AG04449 (cell line): ENCODE measurements at regions of chr4 and their contacts with region 1.

Region 1: DNA sequence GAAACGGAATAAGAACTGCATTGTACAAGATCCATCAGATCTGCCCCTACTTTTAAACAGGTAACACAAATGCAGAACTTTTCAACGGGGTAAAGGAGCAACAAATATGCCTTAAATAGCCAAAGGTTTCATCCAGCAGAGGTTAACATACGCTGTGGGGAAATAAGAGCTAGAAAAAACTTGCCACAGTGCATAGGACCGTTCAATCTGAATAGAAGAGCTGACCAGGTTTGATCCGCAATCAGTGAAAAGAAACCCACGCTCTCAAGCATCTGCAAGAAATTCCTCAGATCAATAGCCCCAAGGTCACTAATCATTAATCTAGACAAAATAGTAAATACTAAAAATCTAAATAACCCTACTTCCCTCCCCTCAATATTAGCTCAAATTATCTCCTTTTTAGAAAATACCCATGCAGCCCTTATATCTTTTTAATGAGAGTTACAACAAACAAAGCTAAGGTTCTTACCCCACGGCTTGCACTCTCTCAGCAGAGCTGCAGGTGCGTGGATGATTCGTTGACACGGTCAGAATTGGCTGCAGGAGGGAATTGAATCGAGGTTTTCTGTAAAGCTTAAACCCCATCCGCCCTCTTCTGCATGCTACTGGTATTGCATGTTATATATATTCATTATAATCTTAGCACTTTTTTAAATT is at the start of gene TLR10:
- DNase-seq: no peak
- H3K4me3 ChIP-seq: no peak within 1 kb of the TSS
- CTCF ChIP-seq: peak; percentile 47

Region 2: GRCh38 chr4:38062088-38062893 is 720.3 kb before region 1 on chr4:
- CTCF ChIA-PET with region 1: interaction called, 16 read pairs
- POLR2A ChIA-PET with region 1: no interaction called
- DNase-seq: no peak
- H3K4me3 ChIP-seq: no peak overlapping the region
- CTCF ChIP-seq: peak; percentile 62

Region 3: GRCh38 chr4:38466401-38466800 is 316.2 kb before region 1 on chr4:
- CTCF ChIA-PET with region 1: no interaction called
- POLR2A ChIA-PET with region 1: no interaction called
- DNase-seq: no peak
- H3K4me3 ChIP-seq: no peak overlapping the region
- CTCF ChIP-seq: no peak

Region 4: DNA sequence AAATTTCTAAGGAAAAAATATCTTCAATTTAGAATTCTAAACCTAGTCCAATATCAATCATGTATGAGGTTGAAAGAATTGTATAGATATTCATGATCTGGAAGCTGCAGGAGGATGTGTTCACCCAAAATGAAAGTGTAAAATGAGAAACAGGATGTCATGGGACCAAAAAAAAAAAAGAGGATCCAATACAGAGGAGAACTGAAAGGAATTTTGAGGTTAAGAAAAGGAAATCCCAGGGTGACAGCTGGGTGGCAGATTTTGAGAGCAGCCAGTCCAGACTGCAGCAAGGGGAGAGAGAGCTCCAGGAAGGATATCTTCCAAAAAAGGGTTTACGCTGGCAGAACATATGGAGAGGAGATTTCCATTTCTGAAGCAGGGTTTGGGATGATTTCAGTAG is 38.7 kb before region 1 on chr4:
- CTCF ChIA-PET with region 1: interaction called, 15 read pairs
- POLR2A ChIA-PET with region 1: no interaction called
- DNase-seq: no peak
- H3K4me3 ChIP-seq: no peak overlapping the region
- CTCF ChIP-seq: no peak

Region 5: GRCh38 chr4:38768968-38769394 is 13.6 kb before region 1 on chr4:
- CTCF ChIA-PET with region 1: interaction called, 125 read pairs
- POLR2A ChIA-PET with region 1: no interaction called
- DNase-seq: no peak
- H3K4me3 ChIP-seq: no peak overlapping the region
- CTCF ChIP-seq: no peak

Region 6: DNA sequence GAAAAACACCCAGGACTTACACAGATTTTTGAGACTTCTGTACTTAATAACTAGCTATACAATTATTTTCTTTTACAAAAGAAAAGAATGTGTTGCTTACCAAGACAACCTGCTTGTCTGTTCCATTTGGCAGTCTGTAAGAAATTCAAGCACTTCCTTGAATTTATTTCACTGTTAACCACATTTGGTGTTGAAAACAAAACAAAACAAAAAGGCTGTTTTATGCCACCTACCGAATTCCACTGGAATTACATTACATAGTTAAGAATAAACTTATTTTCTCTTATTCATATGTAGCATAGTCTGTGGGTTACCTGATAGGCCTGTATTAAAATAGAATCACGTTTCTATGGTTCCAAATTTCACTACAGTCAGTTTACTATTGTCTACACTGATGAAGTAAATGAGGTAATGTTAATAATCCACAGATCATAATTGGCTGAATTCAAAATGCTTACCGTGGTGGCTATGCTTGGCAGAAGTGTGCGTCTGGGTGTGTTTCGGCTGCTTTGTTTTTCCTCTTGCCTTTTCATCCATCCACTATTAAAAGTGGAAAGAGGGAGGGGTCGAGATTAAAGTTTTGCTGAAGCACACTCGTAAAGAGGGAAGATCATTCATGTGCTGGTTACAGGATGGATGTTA is 22.2 kb after region 1 on chr4 and contains the start of gene TLR1:
- CTCF ChIA-PET with region 1: interaction called, 191 read pairs
- POLR2A ChIA-PET with region 1: no interaction called
- DNase-seq: peak; percentile 40
- H3K4me3 ChIP-seq: no peak within 1 kb of the TSS
- CTCF ChIP-seq: no peak

Region 7: GRCh38 chr4:38815885-38816782 is 33.6 kb after region 1 on chr4:
- CTCF ChIA-PET with region 1: interaction called, 12 read pairs
- POLR2A ChIA-PET with region 1: no interaction called
- DNase-seq: no peak
- H3K4me3 ChIP-seq: no peak overlapping the region
- CTCF ChIP-seq: no peak

Region 8: DNA sequence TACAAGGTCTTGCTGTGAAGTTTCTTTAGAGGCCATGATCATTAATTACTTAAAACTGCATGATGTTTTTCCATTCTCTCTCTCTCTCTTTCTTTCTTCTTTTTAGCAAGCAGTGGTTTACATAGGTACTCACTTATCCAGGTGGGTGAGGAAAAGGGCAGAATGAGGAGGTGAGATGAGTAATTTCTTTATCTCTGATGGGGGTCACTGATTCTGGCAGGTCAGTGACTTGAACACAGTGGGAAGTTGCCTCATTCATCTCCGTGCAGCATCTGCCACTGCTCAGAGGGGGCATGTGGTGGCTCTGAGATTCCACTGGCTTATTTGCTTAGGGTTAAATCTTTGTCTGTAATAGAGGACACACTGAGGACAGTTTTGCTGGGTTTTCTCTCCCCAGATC is 147.6 kb after region 1 on chr4:
- CTCF ChIA-PET with region 1: no interaction called
- POLR2A ChIA-PET with region 1: no interaction called
- DNase-seq: no peak
- H3K4me3 ChIP-seq: no peak overlapping the region
- CTCF ChIP-seq: no peak